SK-N-SH (cell line): ENCODE measurements at regions of chr17 and their contacts with region 1.

Region 1: DNA sequence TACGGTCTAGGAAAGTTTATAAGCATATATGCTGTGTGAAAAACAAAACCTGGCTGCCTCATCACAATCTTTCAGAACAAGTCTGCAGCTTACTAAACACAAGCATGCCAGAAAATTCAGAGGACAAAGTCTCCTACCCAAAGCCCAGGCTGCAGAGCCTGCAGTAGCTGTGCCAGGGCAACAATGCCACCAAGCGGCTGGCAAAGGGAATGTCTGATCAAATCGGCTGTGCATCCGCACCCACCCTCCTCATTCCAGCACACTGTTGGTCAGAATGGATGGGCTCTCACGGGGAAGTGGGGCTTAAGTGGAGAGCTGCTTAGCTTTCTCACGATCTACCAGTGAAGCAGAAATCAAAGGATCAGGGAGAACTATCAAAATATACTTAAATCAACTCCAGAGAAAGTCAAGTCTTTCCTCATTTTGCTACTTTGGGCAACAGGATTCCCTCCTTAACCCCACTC is 73.5 kb downstream of the CYTH1 start:
- DNase-seq: peak; percentile 86
- H3K4me3 ChIP-seq: no peak overlapping the region
- H3K27ac ChIP-seq: peak overlapping the region in 1 of 2 experiments; percentile 83; a peak in 2 of 4 replicates
- H3K4me1 ChIP-seq: peaks cover 9 to 66% of the 10 kb centered on the region in 2 experiments
- H3K27me3 ChIP-seq: no peaks in the 10 kb centered on the region
- CTCF ChIP-seq: peak; percentile 99
- EP300 ChIP-seq: no peak
- RAD21 ChIP-seq: peak; percentile 100

Region 2: GRCh38 chr17:78341559-78342448 is 366.7 kb before region 1 on chr17:
- CTCF ChIA-PET with region 1: no interaction called
- POLR2A ChIA-PET with region 1: no interaction called
- DNase-seq: peak; percentile 97
- H3K4me3 ChIP-seq: peak overlapping the region; percentile 31 to 36; a peak in 3 of 4 replicates
- H3K27ac ChIP-seq: peak overlapping the region; percentile 72 to 95
- H3K4me1 ChIP-seq: peaks cover 28 to 39% of the 10 kb centered on the region in 2 experiments; a peak in 3 of 4 replicates
- H3K27me3 ChIP-seq: no peaks in the 10 kb centered on the region
- CTCF ChIP-seq: no peak
- EP300 ChIP-seq: peak in 1 of 2 experiments; percentile 58; a peak in 1 of 4 replicates
- RAD21 ChIP-seq: no peak; the same call in 1 of the 2 replicates

Region 3: DNA sequence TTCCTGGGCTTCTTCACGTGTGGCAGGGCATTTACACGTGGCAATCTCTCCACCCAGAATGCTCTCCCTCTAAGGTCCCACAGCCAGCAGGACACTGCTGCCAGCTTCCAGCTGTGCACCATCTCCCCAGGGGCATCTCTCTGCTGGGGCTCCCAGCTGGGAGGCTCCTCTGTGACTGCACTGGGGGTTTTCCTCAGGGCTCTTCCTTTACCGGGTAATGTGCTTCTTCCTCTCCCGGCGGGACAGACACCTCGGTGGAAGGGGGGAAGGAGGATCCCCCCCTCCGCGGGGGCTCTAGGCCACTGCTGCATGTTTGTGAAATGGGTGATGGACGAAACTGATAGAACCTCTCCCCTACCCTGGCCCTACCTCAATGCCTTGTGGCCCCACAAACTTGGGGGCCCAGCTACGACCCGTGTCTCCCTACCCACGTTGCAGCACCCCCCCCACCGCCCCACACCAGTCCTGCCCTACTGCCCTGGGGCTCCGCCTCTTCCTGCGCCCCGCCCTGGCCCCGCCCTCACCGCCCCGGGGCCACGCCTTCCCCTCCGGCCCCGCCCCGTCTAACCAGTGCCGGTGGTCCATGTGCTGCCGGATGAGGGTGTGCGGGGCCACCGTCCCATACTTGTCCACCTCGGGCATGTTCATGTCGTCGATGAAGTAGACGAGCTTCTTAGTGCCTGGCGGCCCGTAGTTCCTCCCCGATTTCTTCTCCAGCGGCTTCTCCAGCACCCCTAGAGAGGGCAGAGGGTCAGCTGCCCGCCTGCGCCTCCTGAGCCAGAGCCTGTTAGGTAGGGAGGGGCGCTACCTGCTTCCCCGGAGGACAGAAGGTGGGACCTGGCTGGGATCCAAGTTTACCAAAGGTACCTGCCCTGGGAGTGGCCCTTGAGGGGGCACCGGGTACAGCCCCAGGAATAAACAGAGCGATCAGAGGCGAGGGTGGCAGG is 224.0 kb before region 1 on chr17:
- CTCF ChIA-PET with region 1: interaction called, 14 read pairs
- POLR2A ChIA-PET with region 1: no interaction called
- DNase-seq: no peak
- H3K4me3 ChIP-seq: no peak overlapping the region
- H3K27ac ChIP-seq: no peak overlapping the region
- H3K4me1 ChIP-seq: no peaks in the 10 kb centered on the region; a peak in 1 of 4 replicates
- H3K27me3 ChIP-seq: no peaks in the 10 kb centered on the region
- CTCF ChIP-seq: no peak
- EP300 ChIP-seq: no peak
- RAD21 ChIP-seq: no peak

Region 4: GRCh38 chr17:78674595-78675315 is 33.8 kb before region 1 on chr17:
- CTCF ChIA-PET with region 1: interaction called, 20 read pairs
- POLR2A ChIA-PET with region 1: no interaction called
- DNase-seq: peak; percentile 74
- H3K4me3 ChIP-seq: no peak overlapping the region
- H3K27ac ChIP-seq: no peak overlapping the region; a peak in 1 of 4 replicates
- H3K4me1 ChIP-seq: no peaks in the 10 kb centered on the region
- H3K27me3 ChIP-seq: no peaks in the 10 kb centered on the region
- CTCF ChIP-seq: 0 out of 2 replicates have a peak, but pooled peaks have one; percentile 21
- EP300 ChIP-seq: no peak
- RAD21 ChIP-seq: no peak

Region 5: GRCh38 chr17:78723001-78723796 is 14.7 kb after region 1 on chr17:
- CTCF ChIA-PET with region 1: interaction called, 87 read pairs
- POLR2A ChIA-PET with region 1: interaction called, 13 read pairs
- DNase-seq: peak; percentile 93
- H3K4me3 ChIP-seq: peak overlapping the region in 1 of 2 experiments; percentile 46; a peak in 2 of 4 replicates
- H3K27ac ChIP-seq: peak overlapping the region in 1 of 2 experiments; percentile 92; a peak in 2 of 4 replicates
- H3K4me1 ChIP-seq: peaks cover 27 to 54% of the 10 kb centered on the region in 2 experiments
- H3K27me3 ChIP-seq: no peaks in the 10 kb centered on the region
- CTCF ChIP-seq: no peak
- EP300 ChIP-seq: peak in 1 of 2 experiments; percentile 67; a peak in 2 of 4 replicates
- RAD21 ChIP-seq: peak; percentile 34

Region 6: GRCh38 chr17:78745407-78746088 is 37.0 kb after region 1 on chr17:
- CTCF ChIA-PET with region 1: interaction called, 104 read pairs
- POLR2A ChIA-PET with region 1: no interaction called
- DNase-seq: no peak
- H3K4me3 ChIP-seq: no peak overlapping the region
- H3K27ac ChIP-seq: no peak overlapping the region
- H3K4me1 ChIP-seq: peaks cover 4 to 14% of the 10 kb centered on the region in 2 experiments; a peak in 3 of 4 replicates
- H3K27me3 ChIP-seq: no peaks in the 10 kb centered on the region
- CTCF ChIP-seq: peak; percentile 92
- EP300 ChIP-seq: no peak
- RAD21 ChIP-seq: peak; percentile 72

Region 7: DNA sequence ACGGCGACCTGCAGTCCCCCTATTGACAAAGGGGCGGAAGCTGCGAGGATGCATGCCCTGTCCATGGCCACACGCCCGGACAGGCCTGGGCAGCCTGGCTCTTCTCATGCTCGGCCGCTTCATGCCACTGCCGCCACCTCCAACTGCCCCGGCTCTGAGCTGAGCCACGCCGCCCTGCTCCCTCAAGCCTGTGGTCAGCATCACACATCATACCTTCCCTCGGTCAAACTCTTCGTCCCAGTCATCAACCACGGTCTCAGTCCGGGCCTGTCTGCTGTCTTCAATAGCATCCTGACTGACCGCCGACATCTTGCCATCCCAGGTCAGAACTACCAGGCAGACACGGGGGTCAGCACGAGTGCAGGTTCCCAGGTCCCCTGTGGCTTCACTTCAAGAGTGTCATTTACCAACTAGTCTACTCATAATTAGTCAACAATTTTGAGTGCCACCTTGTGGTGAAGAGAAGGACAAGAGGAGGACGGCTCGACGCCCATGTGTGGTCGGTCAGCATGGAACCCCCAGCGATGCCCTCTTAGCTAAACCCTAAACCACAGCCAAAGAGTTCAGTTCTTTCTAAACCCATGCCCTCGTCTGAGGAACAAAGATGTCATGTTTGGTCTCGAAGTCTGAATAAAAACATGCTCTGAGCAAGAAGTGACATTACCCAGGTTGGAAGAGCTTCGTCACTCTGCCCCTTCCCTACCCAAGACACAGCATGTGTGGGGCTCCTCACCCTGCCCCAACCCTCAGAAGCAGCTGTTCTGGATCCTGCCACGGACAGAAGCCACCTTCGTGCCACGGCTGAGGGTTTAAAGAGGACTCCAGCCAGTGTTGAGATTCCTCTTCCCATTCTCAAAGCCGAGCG is 90.4 kb after region 1 on chr17:
- CTCF ChIA-PET with region 1: interaction called, 24 read pairs
- POLR2A ChIA-PET with region 1: no interaction called
- DNase-seq: peak; percentile 70
- H3K4me3 ChIP-seq: no peak overlapping the region
- H3K27ac ChIP-seq: no peak overlapping the region
- H3K4me1 ChIP-seq: no peaks in the 10 kb centered on the region
- H3K27me3 ChIP-seq: no peaks in the 10 kb centered on the region
- CTCF ChIP-seq: peak; percentile 55
- EP300 ChIP-seq: no peak
- RAD21 ChIP-seq: peak; percentile 51

Region 8: DNA sequence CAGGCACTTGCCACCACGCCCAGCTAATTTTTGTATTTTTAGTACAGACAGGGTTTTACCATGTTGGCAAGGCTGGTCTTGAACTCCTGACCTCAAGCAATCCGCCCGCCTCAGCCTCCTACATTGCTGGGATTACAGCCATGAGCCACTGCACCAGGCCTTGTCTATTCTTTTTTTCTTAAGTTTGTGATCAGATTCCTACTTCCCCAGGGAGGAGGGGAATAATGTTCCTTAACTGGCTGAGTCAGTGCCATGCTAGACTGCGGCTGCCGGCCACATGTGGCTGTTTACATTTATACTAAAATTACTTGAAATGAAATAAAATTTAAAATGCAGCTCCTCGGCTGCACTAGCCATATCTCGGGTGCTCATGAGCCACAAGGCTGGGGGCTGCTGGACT is 159.8 kb after region 1 on chr17:
- CTCF ChIA-PET with region 1: no interaction called
- POLR2A ChIA-PET with region 1: no interaction called
- DNase-seq: no peak
- H3K4me3 ChIP-seq: no peak overlapping the region
- H3K27ac ChIP-seq: peak overlapping the region; percentile 3 to 57; a peak in 2 of 4 replicates
- H3K4me1 ChIP-seq: peaks cover 7 to 20% of the 10 kb centered on the region in 2 experiments; a peak in 3 of 4 replicates
- H3K27me3 ChIP-seq: no peaks in the 10 kb centered on the region
- CTCF ChIP-seq: no peak
- EP300 ChIP-seq: no peak
- RAD21 ChIP-seq: no peak

Region 9: GRCh38 chr17:79090443-79091225 is 382.1 kb after region 1 on chr17:
- CTCF ChIA-PET with region 1: no interaction called
- POLR2A ChIA-PET with region 1: no interaction called
- DNase-seq: no peak
- H3K4me3 ChIP-seq: no peak overlapping the region
- H3K27ac ChIP-seq: no peak overlapping the region
- H3K4me1 ChIP-seq: no peaks in the 10 kb centered on the region; a peak in 1 of 4 replicates
- H3K27me3 ChIP-seq: peaks cover 5% of the 10 kb centered on the region; the same call in 1 of the 2 replicates
- CTCF ChIP-seq: no peak
- EP300 ChIP-seq: no peak
- RAD21 ChIP-seq: no peak